ENCODE measurements at regions of chr2 and their contacts with region 1.

Region 1: DNA sequence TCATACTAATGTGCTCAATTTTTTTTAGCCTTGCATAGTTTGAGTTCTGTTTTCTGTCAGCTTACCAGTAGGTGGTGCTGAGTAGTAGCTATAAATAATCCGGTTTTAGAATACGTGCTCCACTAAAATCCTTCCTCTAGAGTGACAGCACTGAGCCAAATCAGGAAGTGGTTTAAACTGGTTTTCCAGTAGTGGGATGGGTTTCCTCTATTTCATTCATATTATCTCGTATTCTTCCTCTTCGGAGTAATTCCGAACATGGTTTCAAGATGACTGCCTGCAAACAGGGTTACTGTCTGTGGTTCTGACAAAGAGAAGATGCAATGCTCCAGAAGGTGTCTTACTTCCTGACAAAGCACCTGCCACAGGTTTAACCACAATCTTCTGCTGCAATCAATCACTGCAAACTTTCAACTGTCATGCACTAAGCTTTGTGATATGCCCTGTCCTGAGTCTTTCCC is 496.9 kb upstream of the VRK2 start:
- DNase-seq: no peak
- ATAC-seq: peak; percentile 71
- H3K4me3 Mint-ChIP-seq: no peak overlapping the region
- H3K27ac Mint-ChIP-seq: no peak overlapping the region
- H3K4me1 Mint-ChIP-seq: peaks cover 17% of the 10 kb centered on the region
- H3K27me3 Mint-ChIP-seq: no peaks in the 10 kb centered on the region
- CTCF ChIP-seq: no peak

Region 2: DNA sequence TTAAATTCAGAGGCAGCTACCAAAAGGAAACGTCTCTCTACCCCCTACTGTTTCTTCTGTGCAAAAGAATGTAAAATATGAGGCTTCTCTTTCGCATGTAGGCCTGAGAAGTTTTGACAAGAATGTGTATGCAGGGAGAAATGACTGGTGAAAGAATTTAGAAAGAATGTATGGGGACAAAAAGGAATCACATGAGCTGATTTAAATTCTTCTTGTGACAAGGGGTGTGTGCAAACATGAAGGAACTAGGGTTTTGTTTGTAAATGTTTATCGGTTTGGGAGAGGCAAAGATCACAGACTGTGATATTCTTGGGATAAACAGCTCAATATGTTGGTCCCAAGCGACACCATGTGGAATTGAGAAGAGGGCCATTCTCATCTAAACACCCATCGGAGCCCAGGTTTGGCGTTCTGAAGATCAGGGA is 151.7 kb after region 1 on chr2:
- CTCF ChIA-PET with region 1: interaction called, 11 read pairs
- POLR2A ChIA-PET with region 1: no interaction called
- DNase-seq: no peak
- ATAC-seq: peak; percentile 71
- H3K4me3 Mint-ChIP-seq: 0 out of 2 replicates have a peak overlapping the region, but pooled peaks have one; percentile 2
- H3K27ac Mint-ChIP-seq: peak overlapping the region; percentile 97
- H3K4me1 Mint-ChIP-seq: peaks cover 44% of the 10 kb centered on the region
- H3K27me3 Mint-ChIP-seq: no peaks in the 10 kb centered on the region; the same call in 1 of the 2 replicates
- CTCF ChIP-seq: no peak

Measured in WTC11 (cell line).